ENCODE measurements at regions of chr16 and their contacts with region 1.

Region 1: DNA sequence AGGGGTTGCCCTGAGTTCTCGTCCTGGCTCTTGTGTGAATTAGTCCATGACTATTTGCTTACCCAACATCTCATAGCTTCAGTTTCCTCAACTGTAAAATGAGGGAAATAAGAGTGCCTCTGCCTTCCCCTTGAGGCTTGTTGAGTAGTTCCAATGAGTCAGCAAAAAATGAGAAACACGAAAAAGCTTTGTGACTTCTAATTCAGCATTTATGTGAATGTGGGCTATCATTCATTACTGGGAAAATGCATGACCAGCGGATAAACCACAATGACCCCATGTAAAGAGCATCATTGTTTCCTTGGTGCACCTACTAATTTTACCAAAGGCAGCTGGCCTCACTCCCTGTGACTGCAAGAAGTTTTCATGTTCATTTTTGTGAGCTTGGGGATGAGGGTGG is 374.6 kb upstream of the HSBP1 start:
- DNase-seq: no peak
- H3K4me3 ChIP-seq: no peak overlapping the region
- H3K27ac ChIP-seq: no peak overlapping the region
- H3K27me3 ChIP-seq: peaks cover 0 to 2% (median 0%) of the 10 kb centered on the region in 45 donors
- CTCF ChIP-seq: no peak

Region 2: GRCh38 chr16:82899731-82900450 is 533.3 kb before region 1 on chr16:
- intact Hi-C with region 1: loop called in 1 of 2 experiments (anchors 10 kb)
- DNase-seq: no peak
- H3K4me3 ChIP-seq: no peak overlapping the region
- H3K27ac ChIP-seq: no peak overlapping the region
- H3K27me3 ChIP-seq: no peaks in the 10 kb centered on the region
- CTCF ChIP-seq: no peak

Region 3: GRCh38 chr16:83581082-83581481 is 147.9 kb after region 1 on chr16:
- intact Hi-C with region 1: no loop called
- DNase-seq: no peak
- H3K4me3 ChIP-seq: no peak overlapping the region
- H3K27ac ChIP-seq: no peak overlapping the region
- H3K27me3 ChIP-seq: peaks cover 0 to 11% (median 0%) of the 10 kb centered on the region in 45 donors
- CTCF ChIP-seq: no peak